Mucosa of descending colon (tissue), 3 donors: ENCODE measurements at regions of chr18 and their contacts with region 1.

Region 1: DNA sequence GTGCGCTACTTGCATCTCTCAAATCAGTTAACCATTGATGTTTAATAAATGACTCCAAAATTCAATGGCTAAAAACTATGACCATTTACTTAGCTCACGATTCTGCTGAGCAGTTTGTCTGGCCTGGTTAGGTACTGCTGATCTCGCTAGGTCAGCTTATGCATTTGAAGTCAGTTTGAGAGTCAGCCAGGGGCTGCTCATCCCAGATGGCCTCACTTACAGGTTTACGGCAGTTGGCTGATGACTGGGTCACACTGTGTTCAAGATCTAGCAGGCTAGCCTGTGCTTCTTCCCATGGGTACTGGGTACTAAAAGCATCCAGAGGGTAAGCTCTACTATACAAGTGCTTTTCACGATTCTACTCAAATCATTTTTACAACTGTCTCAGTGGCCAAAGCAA is 122.1 kb downstream of the DLGAP1 start:
- DNase-seq: no peak
- ATAC-seq: no peak
- H3K4me3 ChIP-seq: no peak overlapping the region
- H3K4me1 ChIP-seq: no peaks in the 10 kb centered on the region
- CTCF ChIP-seq: no peak

Region 2: DNA sequence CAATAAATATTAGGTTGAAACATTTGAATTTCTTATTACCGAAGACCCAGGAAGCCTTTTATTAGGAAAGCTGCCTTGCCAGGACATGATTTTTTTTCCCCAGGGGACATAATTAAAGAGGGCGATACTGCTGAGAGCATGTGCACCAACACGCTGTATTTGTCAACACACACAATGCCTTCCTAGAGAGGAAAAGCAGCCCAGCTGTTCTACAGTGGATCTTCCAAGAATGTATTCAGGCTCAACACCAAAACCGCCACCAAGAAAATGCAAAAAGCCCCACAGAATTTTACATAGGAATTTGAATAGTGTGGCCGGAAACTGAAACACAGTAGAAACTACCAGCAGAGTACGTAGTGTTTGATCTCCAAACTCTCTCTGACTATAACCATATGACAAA is 198.3 kb before region 1 on chr18:
- intact Hi-C with region 1: no loop called
- DNase-seq: no peak
- ATAC-seq: no peak
- H3K4me3 ChIP-seq: no peak overlapping the region
- H3K4me1 ChIP-seq: no peaks in the 10 kb centered on the region
- CTCF ChIP-seq: no peak

Region 3: GRCh38 chr18:4276953-4277585 is 56.0 kb before region 1 on chr18:
- intact Hi-C with region 1: loop called in 1 of 2 experiments (anchors 10 kb)
- DNase-seq: no peak
- ATAC-seq: no peak
- H3K4me3 ChIP-seq: no peak overlapping the region
- H3K4me1 ChIP-seq: no peaks in the 10 kb centered on the region
- CTCF ChIP-seq: no peak